A673 (cell line): ENCODE measurements at regions of chr6 and their contacts with region 1.

Region 1: DNA sequence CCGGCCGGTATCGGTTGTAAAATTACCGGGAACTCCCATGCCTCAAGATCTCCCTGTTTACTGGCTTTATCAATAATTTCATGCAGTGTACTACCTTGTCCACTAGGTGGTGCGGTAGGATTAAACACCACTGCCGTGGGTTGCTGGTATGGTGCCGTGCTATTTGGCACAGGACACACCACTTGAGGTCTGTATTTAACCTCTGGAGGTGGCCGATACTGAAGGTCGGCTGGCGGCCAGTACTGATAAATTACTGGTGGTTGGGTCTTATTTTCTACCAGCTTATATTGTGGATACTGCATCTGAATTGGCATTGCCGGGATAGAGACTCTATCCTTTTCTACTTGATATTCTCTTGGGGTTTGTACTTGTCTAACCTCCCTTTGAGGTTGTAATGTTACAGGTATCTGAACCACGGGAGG is 14.3 kb upstream of the PTCRA start:
- DNase-seq: peak; percentile 92
- H3K4me3 ChIP-seq: peak overlapping the region; percentile 25
- H3K27ac ChIP-seq: no peak overlapping the region
- H3K4me1 ChIP-seq: peaks cover 33% of the 10 kb centered on the region
- H3K27me3 ChIP-seq: no peaks in the 10 kb centered on the region
- CTCF ChIP-seq: peak; percentile 89

Region 2: DNA sequence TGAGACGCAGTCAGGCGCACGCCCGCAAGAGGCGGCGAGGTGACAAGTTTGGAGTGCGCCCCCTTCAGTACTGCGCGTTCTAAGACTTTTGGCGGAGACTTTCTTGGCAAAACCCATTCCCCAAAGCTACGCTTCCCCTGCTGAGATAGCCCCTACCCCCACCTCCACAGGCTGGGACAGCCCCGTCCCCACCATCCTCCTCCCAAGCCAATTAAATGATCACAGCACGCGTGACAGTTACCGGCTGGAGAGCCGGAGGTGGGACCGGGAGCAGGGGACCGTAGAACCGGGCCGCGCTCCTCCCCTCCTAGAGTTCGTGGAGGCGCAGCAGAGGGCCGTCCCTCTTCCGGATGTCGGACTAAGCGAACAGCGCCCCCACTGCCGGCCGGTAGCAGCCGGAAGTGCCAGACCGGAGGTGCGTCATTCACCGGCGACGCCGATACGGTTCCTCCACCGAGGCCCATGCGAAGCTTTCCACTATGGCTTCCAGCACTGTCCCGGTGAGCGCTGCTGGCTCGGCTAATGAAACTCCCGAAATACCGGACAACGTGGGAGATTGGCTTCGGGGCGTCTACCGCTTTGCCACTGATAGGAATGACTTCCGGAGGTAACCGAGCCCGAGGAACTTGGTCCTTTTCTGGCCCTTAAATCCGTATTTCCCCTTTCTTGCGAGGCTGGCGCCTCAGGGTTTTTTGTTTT is 1114.2 kb before region 1 on chr6 and contains the start of gene TOMM6:
- CTCF ChIA-PET with region 1: no interaction called
- POLR2A ChIA-PET with region 1: no interaction called
- intact Hi-C with region 1: loop called (anchors 5 kb)
- DNase-seq: peak; percentile 95
- H3K4me3 ChIP-seq: peak within 1 kb of the TSS; percentile 86
- H3K27ac ChIP-seq: peak within 1 kb of the TSS; percentile 86
- H3K4me1 ChIP-seq: peaks cover 5% of the 10 kb centered on the region
- H3K27me3 ChIP-seq: no peaks in the 10 kb centered on the region
- CTCF ChIP-seq: no peak; the same call in none of the 2 replicates
- total RNA-seq, gene TOMM6: 197 and 206 TPM in 2 replicates

Region 3: GRCh38 chr6:42661540-42662153 is 239.9 kb before region 1 on chr6:
- CTCF ChIA-PET with region 1: interaction called, 5 read pairs
- POLR2A ChIA-PET with region 1: no interaction called
- intact Hi-C with region 1: loop called (anchors 1 kb)
- DNase-seq: peak; percentile 83
- H3K4me3 ChIP-seq: no peak overlapping the region
- H3K27ac ChIP-seq: no peak overlapping the region
- H3K4me1 ChIP-seq: no peaks in the 10 kb centered on the region
- H3K27me3 ChIP-seq: no peaks in the 10 kb centered on the region
- CTCF ChIP-seq: peak; percentile 94

Region 4: GRCh38 chr6:43013843-43014433 is 112.4 kb after region 1 on chr6 and contains the starts of genes KLHDC3 and MEA1:
- CTCF ChIA-PET with region 1: no interaction called
- POLR2A ChIA-PET with region 1: no interaction called
- intact Hi-C with region 1: loop called (anchors 5 kb)
- DNase-seq: peak; percentile 100
- H3K4me3 ChIP-seq: peak within 1 kb of the TSS; percentile 82
- H3K27ac ChIP-seq: peak within 1 kb of the TSS; percentile 79
- H3K4me1 ChIP-seq: peaks cover 7% of the 10 kb centered on the region
- H3K27me3 ChIP-seq: no peaks in the 10 kb centered on the region
- CTCF ChIP-seq: no peak
- total RNA-seq, gene KLHDC3: 90.1 and 108 TPM in 2 replicates
- total RNA-seq, gene MEA1: 113 and 125 TPM in 2 replicates

Region 5: DNA sequence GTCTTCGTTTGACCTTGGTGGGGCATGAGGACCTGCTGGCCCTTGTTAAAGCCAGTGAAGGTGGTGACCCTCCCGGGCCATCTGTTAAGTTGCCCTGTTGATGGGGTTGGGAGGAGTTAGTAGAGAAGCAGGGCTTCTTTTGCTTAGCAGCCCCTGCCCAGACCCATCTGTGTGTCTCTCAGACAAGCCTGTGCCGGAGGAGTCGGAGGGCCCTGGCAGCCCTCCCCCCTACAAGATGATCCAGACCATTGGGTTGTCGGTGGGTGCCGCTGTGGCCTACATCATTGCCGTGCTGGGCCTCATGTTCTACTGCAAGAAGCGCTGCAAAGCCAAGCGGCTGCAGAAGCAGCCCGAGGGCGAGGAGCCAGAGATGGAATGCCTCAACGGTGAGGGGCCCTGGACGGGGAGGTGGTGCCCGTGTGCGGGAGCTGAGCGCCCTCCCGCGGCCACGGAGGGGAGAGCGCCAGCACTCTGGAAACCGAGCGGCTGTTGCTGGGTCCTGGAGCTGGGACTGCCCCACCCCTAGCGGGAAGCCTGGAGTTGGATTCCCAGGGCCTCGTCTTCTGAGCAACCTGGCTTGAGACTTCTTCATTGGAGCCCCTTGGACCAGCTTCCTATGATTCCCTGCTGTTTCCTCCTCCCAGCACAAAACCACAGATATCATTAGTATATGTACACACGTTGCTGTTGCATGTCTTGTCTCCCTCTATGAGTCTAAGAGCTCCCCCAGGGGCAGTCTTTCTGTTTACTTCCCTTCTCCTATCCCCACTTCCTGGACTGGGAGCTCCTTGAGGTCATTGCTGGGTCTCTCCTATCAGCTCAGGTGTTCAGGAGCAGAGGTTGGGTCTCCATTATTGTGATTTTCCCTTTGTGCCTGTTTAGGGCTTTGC is 241.9 kb after region 1 on chr6:
- CTCF ChIA-PET with region 1: interaction called, 3 read pairs
- POLR2A ChIA-PET with region 1: no interaction called
- intact Hi-C with region 1: loop called (anchors 5 kb)
- DNase-seq: peak; percentile 92
- H3K4me3 ChIP-seq: no peak overlapping the region
- H3K27ac ChIP-seq: no peak overlapping the region
- H3K4me1 ChIP-seq: peaks cover 7% of the 10 kb centered on the region
- H3K27me3 ChIP-seq: no peaks in the 10 kb centered on the region
- CTCF ChIP-seq: peak; percentile 99

Region 6: DNA sequence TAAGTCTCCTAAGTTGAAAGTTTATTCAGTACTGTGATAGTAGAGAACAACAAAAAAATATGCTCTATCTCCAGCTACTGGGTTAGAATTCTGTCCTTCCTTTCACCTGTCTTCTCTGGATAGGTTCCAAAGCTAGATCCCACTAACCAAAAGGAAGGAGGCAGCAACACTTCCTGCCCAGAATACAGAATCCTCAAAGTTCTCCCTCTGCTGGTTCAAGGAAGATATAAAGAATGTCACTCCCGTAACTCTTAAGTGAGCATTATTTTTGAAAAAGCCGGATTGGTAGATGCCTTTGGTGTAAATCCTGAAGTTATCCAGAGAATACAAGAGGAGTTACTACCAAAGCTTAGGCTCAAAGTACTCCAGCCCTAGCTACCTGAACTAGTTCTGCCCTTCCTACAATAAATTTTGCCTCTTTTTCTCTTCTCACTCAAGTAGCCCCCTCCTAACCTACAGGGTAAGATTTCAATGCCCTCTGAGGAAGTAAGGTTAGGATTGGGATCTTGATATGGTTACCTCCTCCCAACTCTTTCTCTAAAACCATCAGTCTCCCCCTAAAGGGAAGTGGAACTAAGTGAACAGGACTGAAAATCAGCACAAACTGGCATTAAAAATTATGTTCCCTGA is 433.0 kb after region 1 on chr6:
- CTCF ChIA-PET with region 1: no interaction called
- POLR2A ChIA-PET with region 1: no interaction called
- intact Hi-C with region 1: loop called (anchors 1 kb)
- DNase-seq: peak; percentile 78
- H3K4me3 ChIP-seq: no peak overlapping the region
- H3K27ac ChIP-seq: no peak overlapping the region
- H3K4me1 ChIP-seq: no peaks in the 10 kb centered on the region
- H3K27me3 ChIP-seq: no peaks in the 10 kb centered on the region
- CTCF ChIP-seq: peak; percentile 69

Region 7: GRCh38 chr6:43516697-43517504 is 615.4 kb after region 1 on chr6 and contains the starts of genes POLR1C and YIPF3:
- CTCF ChIA-PET with region 1: no interaction called
- POLR2A ChIA-PET with region 1: no interaction called
- intact Hi-C with region 1: loop called (anchors 1 kb)
- DNase-seq: peak; percentile 99
- H3K4me3 ChIP-seq: peak within 1 kb of the TSS; percentile 89
- H3K27ac ChIP-seq: peak within 1 kb of the TSS; percentile 88
- H3K4me1 ChIP-seq: peaks cover 12% of the 10 kb centered on the region
- H3K27me3 ChIP-seq: no peaks in the 10 kb centered on the region
- CTCF ChIP-seq: no peak
- total RNA-seq, gene POLR1C: 64.1 and 75.4 TPM in 2 replicates
- total RNA-seq, gene YIPF3: 75.1 and 84.2 TPM in 2 replicates